MCF 10A (cell line): ENCODE measurements at regions of chr19 and their contacts with region 1.

Region 1: GRCh38 chr19:10332955-10333757 is at the start of gene RAVER1:
- DNase-seq: peak; percentile 98
- H3K4me3 Mint-ChIP-seq: peak within 1 kb of the TSS; percentile 95
- H3K27ac Mint-ChIP-seq: peak within 1 kb of the TSS; percentile 89
- H3K4me1 Mint-ChIP-seq: no peaks in the 10 kb centered on the region
- H3K27me3 Mint-ChIP-seq: no peaks in the 10 kb centered on the region
- CTCF ChIP-seq: no peak
- total RNA-seq, gene RAVER1: 31.5 and 36.1 TPM in 2 replicates

Region 2: GRCh38 chr19:10269333-10270179 is 63.6 kb before region 1 on chr19:
- CTCF ChIA-PET with region 1: interaction called, 4 read pairs
- POLR2A ChIA-PET with region 1: interaction called, 18 read pairs
- intact Hi-C with region 1: no loop called
- DNase-seq: peak; percentile 78
- H3K4me3 Mint-ChIP-seq: peak overlapping the region; percentile 54
- H3K27ac Mint-ChIP-seq: peak overlapping the region; percentile 16
- H3K4me1 Mint-ChIP-seq: no peaks in the 10 kb centered on the region
- H3K27me3 Mint-ChIP-seq: no peaks in the 10 kb centered on the region
- CTCF ChIP-seq: peak; percentile 95

Region 3: GRCh38 chr19:10315335-10316214 is 17.6 kb before region 1 on chr19 and contains the start of gene FDX2:
- CTCF ChIA-PET with region 1: interaction called, 3 read pairs
- POLR2A ChIA-PET with region 1: interaction called, 11 read pairs
- intact Hi-C with region 1: no loop called
- DNase-seq: peak; percentile 84
- H3K4me3 Mint-ChIP-seq: peak within 1 kb of the TSS; percentile 93
- H3K27ac Mint-ChIP-seq: peak within 1 kb of the TSS; percentile 90
- H3K4me1 Mint-ChIP-seq: peaks cover 18% of the 10 kb centered on the region
- H3K27me3 Mint-ChIP-seq: no peaks in the 10 kb centered on the region
- CTCF ChIP-seq: no peak
- total RNA-seq, gene FDX2: 30.2 and 30.3 TPM in 2 replicates

Region 4: DNA sequence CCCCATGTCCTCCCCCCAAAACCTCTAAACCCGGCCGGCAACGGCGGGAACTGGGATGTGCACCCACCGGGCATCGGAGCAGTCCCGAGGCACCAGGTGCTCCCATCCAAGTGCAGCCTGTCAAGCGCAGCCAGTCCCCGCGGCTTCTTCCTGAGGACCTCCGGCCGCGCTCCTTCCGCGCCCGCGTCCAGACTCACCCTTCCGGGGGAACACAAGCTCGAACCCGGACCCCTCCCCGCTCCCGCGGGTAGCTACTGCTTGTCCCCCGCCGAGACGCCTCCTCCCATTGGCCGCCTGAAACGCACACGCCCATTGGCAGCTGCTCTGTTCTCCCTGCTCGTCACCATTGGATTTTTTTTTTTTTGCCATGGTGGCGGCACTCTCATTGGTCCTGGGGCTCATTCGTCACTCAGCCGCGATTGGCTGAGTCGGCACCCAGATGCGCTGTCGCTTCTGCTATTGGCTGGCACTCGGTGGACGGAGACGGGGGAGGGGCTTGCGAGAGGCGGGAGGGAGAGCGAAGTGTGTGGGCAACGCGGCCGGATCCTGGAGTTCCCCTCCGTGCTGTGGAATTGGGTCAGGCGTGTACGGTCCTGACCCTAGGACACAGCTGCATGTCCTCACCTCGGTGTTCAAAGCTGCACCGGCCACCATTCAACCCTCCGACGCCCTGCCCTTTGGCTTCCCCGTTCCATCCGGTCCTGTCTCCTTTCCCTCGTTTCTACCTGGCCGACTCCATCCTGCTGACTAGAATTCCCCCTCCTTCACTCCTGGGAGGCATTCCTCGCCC is 47.4 kb after region 1 on chr19 and contains the start of gene TYK2:
- CTCF ChIA-PET with region 1: interaction called, 3 read pairs
- POLR2A ChIA-PET with region 1: interaction called, 51 read pairs
- intact Hi-C with region 1: loop called (anchors 5 kb)
- DNase-seq: peak; percentile 100
- H3K4me3 Mint-ChIP-seq: peak within 1 kb of the TSS; percentile 89
- H3K27ac Mint-ChIP-seq: peak within 1 kb of the TSS; percentile 80
- H3K4me1 Mint-ChIP-seq: peaks cover 6% of the 10 kb centered on the region
- H3K27me3 Mint-ChIP-seq: no peaks in the 10 kb centered on the region
- CTCF ChIP-seq: no peak
- total RNA-seq, gene TYK2: 75.0 and 83.7 TPM in 2 replicates

Region 5: GRCh38 chr19:10636304-10636972 is 303.3 kb after region 1 on chr19:
- CTCF ChIA-PET with region 1: no interaction called
- POLR2A ChIA-PET with region 1: no interaction called
- intact Hi-C with region 1: no loop called
- DNase-seq: no peak
- H3K4me3 Mint-ChIP-seq: no peak overlapping the region
- H3K27ac Mint-ChIP-seq: no peak overlapping the region
- H3K4me1 Mint-ChIP-seq: no peaks in the 10 kb centered on the region
- H3K27me3 Mint-ChIP-seq: no peaks in the 10 kb centered on the region
- CTCF ChIP-seq: no peak